ENCODE measurements at regions of chr6 and their contacts with region 1.

Region 1: GRCh38 chr6:29964887-29965562 is 22.7 kb downstream of the HLA-A start:
- DNase-seq: peak; percentile 88
- ATAC-seq: peak; percentile 93
- H3K4me3 Mint-ChIP-seq: peak overlapping the region; percentile 84
- H3K27ac Mint-ChIP-seq: peak overlapping the region; percentile 97
- H3K4me1 Mint-ChIP-seq: peaks cover 42% of the 10 kb centered on the region
- H3K27me3 Mint-ChIP-seq: no peaks in the 10 kb centered on the region

Region 2: DNA sequence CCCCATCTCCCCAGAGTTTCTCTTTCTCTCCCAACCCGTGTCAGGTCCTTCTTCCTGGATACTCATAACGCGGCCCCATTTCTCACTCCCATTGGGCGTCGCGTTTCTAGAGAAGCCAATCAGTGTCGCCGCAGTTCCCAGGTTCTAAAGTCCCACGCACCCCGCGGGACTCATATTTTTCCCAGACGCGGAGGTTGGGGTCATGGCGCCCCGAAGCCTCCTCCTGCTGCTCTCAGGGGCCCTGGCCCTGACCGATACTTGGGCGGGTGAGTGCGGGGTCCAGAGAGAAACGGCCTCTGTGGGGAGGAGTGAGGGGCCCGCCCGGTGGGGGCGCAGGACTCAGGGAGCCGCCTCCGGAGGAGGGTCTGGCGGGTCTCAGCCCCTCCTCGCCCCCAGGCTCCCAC is 241.8 kb before region 1 on chr6 and contains the start of gene HLA-F:
- CTCF ChIA-PET with region 1: no interaction called
- POLR2A ChIA-PET with region 1: no interaction called
- intact Hi-C with region 1: loop called in 1 of 2 experiments (anchors 5 kb)
- DNase-seq: peak; percentile 88
- ATAC-seq: peak; percentile 89
- H3K4me3 Mint-ChIP-seq: peak within 1 kb of the TSS; percentile 92
- H3K27ac Mint-ChIP-seq: peak within 1 kb of the TSS; percentile 94
- H3K4me1 Mint-ChIP-seq: peaks cover 49% of the 10 kb centered on the region
- H3K27me3 Mint-ChIP-seq: no peaks in the 10 kb centered on the region
- total RNA-seq, gene HLA-F: 216 to 229 TPM

Region 3: GRCh38 chr6:29847871-29848630 is 117.0 kb before region 1 on chr6:
- CTCF ChIA-PET with region 1: interaction called, 27 read pairs
- POLR2A ChIA-PET with region 1: no interaction called
- intact Hi-C with region 1: loop called (anchors 1 kb)
- DNase-seq: peak; percentile 91
- ATAC-seq: peak; percentile 74
- H3K4me3 Mint-ChIP-seq: no peak overlapping the region
- H3K27ac Mint-ChIP-seq: no peak overlapping the region
- H3K4me1 Mint-ChIP-seq: peaks cover 25% of the 10 kb centered on the region
- H3K27me3 Mint-ChIP-seq: peaks cover 44% of the 10 kb centered on the region

Region 4: DNA sequence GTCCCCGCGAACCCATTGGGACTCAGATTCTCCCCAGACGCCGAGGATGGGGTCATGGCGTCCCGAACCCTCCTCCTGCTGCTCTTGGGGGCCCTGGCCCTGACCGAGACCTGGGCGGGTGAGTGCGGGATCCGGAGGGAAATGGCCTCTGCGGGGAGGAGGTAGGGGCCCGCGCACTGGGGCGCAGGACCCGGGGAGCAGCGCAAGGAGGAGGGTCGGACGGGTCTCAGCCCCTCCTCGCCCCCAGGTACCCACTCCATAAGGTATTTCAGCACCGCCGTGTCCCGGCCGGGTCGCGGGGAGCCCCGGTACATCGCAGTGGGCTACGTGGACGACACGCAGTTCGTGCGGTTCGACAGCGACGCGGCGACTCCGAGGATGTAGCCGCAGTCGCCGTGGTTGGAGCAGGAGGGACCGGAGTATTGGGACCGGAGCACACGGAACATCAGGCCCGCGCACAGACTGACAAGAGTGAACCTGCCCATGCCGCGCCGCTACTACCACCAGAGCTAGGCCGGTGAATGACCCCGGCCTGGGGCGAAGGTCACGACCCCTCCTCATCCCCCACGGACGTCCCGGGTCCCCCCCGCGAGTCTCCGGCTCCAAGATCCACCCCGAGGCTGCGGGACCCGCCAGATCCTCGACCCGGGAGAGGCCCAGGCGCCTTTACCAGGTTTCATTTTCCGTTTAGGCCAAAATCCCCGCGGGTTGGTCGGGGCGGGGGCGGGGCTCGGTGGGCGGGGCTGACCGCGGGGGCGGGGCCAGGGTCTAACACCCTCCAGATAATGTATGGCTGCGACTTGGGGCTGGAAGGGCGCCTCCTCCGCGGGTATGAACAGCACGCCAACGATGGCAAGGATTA is 38.4 kb before region 1 on chr6:
- CTCF ChIA-PET with region 1: interaction called, 10 read pairs
- POLR2A ChIA-PET with region 1: interaction called, 3 read pairs
- intact Hi-C with region 1: loop called (anchors 1 to 5 kb)
- DNase-seq: peak; percentile 92
- ATAC-seq: peak; percentile 91
- H3K4me3 Mint-ChIP-seq: peak overlapping the region; percentile 82
- H3K27ac Mint-ChIP-seq: peak overlapping the region; percentile 94
- H3K4me1 Mint-ChIP-seq: peaks cover 32% of the 10 kb centered on the region
- H3K27me3 Mint-ChIP-seq: no peaks in the 10 kb centered on the region

Region 5: DNA sequence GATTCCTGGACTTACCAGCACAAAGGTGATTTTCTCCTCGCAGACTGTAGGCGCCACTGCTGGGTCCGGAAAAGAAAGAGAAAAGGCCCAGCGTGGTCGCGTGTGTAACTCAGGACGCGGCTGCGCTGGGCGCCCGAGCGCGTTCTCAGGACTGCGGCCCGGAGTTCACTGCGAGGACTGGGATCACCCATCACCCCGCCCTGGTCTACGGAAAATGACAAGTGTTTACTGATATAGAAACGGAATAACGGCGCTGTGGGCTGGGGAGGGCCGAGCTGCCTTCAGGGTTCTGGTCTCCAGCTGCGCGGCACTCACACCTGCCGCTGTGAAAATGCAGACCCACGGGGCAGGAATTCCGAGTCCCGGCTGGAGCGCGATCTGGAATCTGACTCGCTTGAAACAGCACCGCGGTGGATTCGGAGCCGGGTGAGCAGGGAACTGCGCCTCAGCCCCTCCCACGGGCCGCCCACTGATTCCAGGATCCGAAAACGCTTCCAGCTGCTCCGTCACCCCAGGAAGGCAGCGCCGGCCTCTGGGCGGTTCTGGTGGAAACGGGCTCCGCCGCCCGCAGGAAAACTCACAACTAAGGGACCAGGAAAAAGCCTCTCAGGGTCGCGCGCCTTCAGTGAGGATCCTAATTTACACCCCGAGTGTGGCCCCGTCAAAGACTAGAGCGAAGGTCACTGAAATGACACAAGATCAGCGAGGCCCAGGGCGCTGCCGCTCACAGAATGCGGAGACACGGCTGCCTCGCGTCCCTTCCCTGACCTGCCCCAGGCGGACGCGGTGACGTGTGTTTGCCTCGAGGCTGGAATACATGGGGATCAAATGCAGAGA is 11.8 kb after region 1 on chr6:
- CTCF ChIA-PET with region 1: interaction called, 6 read pairs
- POLR2A ChIA-PET with region 1: no interaction called
- intact Hi-C with region 1: loop called in 1 of 2 experiments (anchors 1 kb)
- DNase-seq: peak; percentile 77
- ATAC-seq: peak; percentile 86
- H3K4me3 Mint-ChIP-seq: peak overlapping the region; percentile 71
- H3K27ac Mint-ChIP-seq: peak overlapping the region; percentile 57
- H3K4me1 Mint-ChIP-seq: peaks cover 26% of the 10 kb centered on the region
- H3K27me3 Mint-ChIP-seq: peaks cover 37% of the 10 kb centered on the region

Measured in activated CD4-positive, alpha-beta T cell treated with anti-CD3 and anti-CD28 coated beads for 36 hours (primary cell).